ENCODE measurements at regions of chr2 and their contacts with region 1.

Region 1: GRCh38 chr2:219388127-219388844 is 574 bp upstream of the DNPEP start:
- DNase-seq: peak; percentile 99
- H3K4me3 Mint-ChIP-seq: peak overlapping the region; percentile 69
- H3K27ac Mint-ChIP-seq: peak overlapping the region; percentile 66
- H3K4me1 Mint-ChIP-seq: peaks cover 16% of the 10 kb centered on the region
- H3K27me3 Mint-ChIP-seq: no peaks in the 10 kb centered on the region

Region 2: DNA sequence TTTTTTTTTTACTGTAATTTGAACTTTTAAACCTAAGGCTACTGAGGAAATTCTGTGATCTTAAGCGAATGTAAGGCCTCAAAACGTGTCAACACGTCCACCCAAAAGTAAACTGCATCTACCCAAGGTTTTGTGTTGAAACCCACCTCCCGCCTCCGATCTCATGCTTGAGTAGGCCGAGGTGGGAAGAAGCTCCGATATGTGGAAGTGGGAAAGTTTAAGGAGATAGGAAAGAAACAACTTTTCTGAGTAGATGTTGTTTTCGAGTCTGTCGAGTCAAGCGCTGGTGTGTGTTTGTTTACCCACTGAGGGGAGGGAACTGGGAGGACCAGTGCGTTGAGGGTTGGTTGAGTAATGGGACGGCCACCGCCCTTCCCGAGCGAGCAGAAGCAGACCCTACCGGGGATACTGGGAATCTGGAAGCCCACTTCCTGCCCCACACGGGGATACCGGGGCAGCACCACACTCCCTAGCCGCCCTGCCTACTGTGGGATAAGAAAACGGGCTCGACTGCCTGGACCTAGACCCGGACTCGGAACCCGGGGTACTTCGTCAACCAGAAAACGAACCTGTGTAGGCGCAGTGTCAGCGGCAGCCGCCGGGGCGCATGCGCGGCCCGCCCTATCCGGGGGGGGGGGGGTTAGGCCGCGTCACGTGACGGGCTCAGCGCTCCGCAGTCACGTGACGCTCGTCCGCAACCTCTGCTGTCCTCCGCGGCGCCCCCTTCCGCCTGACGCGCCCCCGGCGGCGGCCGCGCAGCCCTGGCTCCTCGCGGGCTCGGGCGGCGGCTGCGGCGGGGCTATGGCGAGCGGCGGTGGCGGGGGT is 210.5 kb before region 1 on chr2 and contains the start of gene RETREG2:
- CTCF ChIA-PET with region 1: no interaction called
- POLR2A ChIA-PET with region 1: interaction called, 5 read pairs
- intact Hi-C with region 1: loop called (anchors 1 kb)
- DNase-seq: peak; percentile 86
- H3K4me3 Mint-ChIP-seq: peak within 1 kb of the TSS; percentile 95
- H3K27ac Mint-ChIP-seq: peak within 1 kb of the TSS; percentile 99
- H3K4me1 Mint-ChIP-seq: peaks cover 52% of the 10 kb centered on the region
- H3K27me3 Mint-ChIP-seq: no peaks in the 10 kb centered on the region
- total RNA-seq, gene RETREG2: 60.3 to 67.9 TPM

Region 3: GRCh38 chr2:219229305-219230058 is 158.8 kb before region 1 on chr2 and contains the starts of genes ANKZF1 and ATG9A:
- CTCF ChIA-PET with region 1: no interaction called
- POLR2A ChIA-PET with region 1: no interaction called
- intact Hi-C with region 1: loop called (anchors 1 kb)
- DNase-seq: peak; percentile 99
- H3K4me3 Mint-ChIP-seq: peak within 1 kb of the TSS; percentile 95
- H3K27ac Mint-ChIP-seq: peak within 1 kb of the TSS; percentile 99
- H3K4me1 Mint-ChIP-seq: peaks cover 50% of the 10 kb centered on the region
- H3K27me3 Mint-ChIP-seq: no peaks in the 10 kb centered on the region
- total RNA-seq, gene ANKZF1: 97.0 to 97.5 TPM
- total RNA-seq, gene ATG9A: 34.7 to 39.5 TPM

Region 4: DNA sequence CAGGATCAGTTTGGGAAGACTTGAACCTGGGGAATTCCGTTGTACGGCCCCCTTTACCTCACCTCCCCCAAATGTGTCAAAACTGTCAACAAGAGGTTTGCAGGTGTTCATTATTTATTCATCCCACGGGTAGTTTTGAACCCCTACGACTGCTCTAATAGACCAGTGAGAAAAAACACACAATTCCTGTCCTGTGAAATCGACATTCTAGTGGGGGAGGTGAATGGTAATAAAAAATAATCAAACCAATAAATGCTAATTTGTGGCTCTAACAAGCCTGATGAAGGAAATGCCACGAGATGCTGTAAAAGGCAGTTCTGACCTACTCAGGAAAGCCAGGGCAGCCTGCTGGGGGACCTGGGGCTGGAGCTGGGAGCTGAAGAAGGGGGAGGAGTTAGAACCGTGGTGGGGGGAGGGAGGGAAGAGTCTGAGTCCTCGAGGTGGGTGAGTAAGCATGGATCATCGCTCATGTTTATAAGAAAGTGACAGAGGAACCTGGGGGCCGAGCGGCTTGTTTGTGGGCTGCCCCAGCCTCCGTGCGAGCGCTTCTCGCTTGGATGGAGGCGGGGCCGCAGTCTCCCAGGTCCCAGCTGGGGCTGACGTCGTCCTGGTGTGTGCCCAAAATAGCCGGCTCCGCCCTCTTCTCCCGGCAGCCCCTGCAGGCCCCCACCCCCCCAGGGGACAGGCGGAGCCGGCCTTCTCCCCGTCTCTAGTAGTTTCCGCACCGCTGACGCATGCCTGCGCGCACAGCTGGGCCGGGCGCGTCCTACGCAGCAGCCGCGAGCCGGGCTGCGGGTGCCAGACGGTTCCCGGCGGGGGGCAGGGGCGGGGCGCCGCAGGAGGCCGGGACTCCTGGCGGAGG is 109.4 kb before region 1 on chr2 and contains the start of gene DNAJB2:
- CTCF ChIA-PET with region 1: interaction called, 6 read pairs
- POLR2A ChIA-PET with region 1: interaction called, 5 read pairs
- intact Hi-C with region 1: loop called (anchors 1 kb)
- DNase-seq: peak; percentile 100
- H3K4me3 Mint-ChIP-seq: peak within 1 kb of the TSS; percentile 80
- H3K27ac Mint-ChIP-seq: peak within 1 kb of the TSS; percentile 95
- H3K4me1 Mint-ChIP-seq: peaks cover 43% of the 10 kb centered on the region
- H3K27me3 Mint-ChIP-seq: no peaks in the 10 kb centered on the region
- total RNA-seq, gene DNAJB2: 37.3 to 39.1 TPM

Region 5: GRCh38 chr2:219498280-219499057 is 110.2 kb after region 1 on chr2 and contains the start of gene GMPPA:
- CTCF ChIA-PET with region 1: interaction called, 5 read pairs
- POLR2A ChIA-PET with region 1: interaction called, 5 read pairs
- intact Hi-C with region 1: loop called (anchors 1 kb)
- DNase-seq: peak; percentile 97
- H3K4me3 Mint-ChIP-seq: peak within 1 kb of the TSS; percentile 83
- H3K27ac Mint-ChIP-seq: peak within 1 kb of the TSS; percentile 72
- H3K4me1 Mint-ChIP-seq: peaks cover 38% of the 10 kb centered on the region
- H3K27me3 Mint-ChIP-seq: peaks cover 41% of the 10 kb centered on the region
- total RNA-seq, gene GMPPA: 37.1 to 37.4 TPM

Region 6: GRCh38 chr2:219552382-219553167 is 164.3 kb after region 1 on chr2:
- CTCF ChIA-PET with region 1: no interaction called
- POLR2A ChIA-PET with region 1: interaction called, 3 read pairs
- intact Hi-C with region 1: loop called (anchors 1 kb)
- DNase-seq: peak; percentile 85
- H3K4me3 Mint-ChIP-seq: peak overlapping the region; percentile 68
- H3K27ac Mint-ChIP-seq: no peak overlapping the region
- H3K4me1 Mint-ChIP-seq: peaks cover 10% of the 10 kb centered on the region
- H3K27me3 Mint-ChIP-seq: peaks cover 37% of the 10 kb centered on the region

Measured in activated CD4-positive, alpha-beta memory T cell treated with anti-CD3 and anti-CD28 coated beads for 36 hours (primary cell).